ENCODE measurements at regions of chr13 and their contacts with region 1.

Region 1: DNA sequence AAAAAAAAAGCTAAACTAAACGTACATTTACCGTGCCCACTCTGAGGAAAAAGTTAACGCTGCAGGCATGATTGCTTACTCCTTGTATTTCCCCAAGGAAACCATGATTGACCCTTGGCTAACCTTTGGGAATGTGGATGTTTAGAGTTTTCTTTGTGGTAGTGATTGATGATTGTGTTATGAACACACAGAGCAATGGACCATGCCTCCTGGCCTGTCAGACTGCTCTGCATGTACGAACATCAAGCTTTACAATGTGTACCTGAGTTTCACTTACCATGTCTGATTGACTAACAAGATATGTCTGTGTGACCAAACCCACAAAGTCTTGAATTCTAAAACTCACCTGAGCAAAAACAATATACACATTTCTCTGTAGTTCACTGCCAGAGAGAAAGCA is 35.1 kb downstream of the MYCBP2 start:
- DNase-seq: no peak
- H3K4me3 Mint-ChIP-seq: no peak overlapping the region
- H3K27ac Mint-ChIP-seq: no peak overlapping the region
- H3K4me1 Mint-ChIP-seq: peaks cover 41% of the 10 kb centered on the region
- H3K27me3 Mint-ChIP-seq: no peaks in the 10 kb centered on the region

Region 2: GRCh38 chr13:77026818-77027585 is 264.8 kb before region 1 on chr13 and contains the start of gene FBXL3:
- intact Hi-C with region 1: loop called (anchors 5 kb)
- DNase-seq: peak; percentile 78
- H3K4me3 Mint-ChIP-seq: peak within 1 kb of the TSS; percentile 94
- H3K27ac Mint-ChIP-seq: peak within 1 kb of the TSS; percentile 93
- H3K4me1 Mint-ChIP-seq: peaks cover 58% of the 10 kb centered on the region
- H3K27me3 Mint-ChIP-seq: no peaks in the 10 kb centered on the region
- total RNA-seq, gene FBXL3: 40.1 and 40.8 TPM in 2 replicates

Region 3: DNA sequence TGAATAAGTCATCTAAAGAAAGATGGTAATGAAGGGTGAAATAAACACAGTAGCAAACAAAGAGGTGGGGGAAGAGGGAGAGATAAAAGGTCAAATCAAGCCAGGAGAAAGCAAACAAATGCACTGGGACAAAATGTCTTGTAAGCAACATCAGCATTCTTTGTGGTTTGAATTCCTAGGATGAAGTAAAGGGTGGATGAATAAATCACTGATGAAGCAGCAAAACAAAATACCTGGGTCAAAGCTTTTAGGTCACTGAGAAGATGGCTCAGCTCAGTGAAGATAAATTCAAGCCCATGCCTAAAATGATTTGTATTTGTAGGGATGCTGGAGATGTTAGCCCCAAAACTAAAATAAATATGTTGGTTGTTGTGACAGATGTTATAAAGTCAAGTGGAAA is 178.3 kb before region 1 on chr13:
- intact Hi-C with region 1: no loop called
- DNase-seq: no peak
- H3K4me3 Mint-ChIP-seq: no peak overlapping the region
- H3K27ac Mint-ChIP-seq: no peak overlapping the region
- H3K4me1 Mint-ChIP-seq: no peaks in the 10 kb centered on the region
- H3K27me3 Mint-ChIP-seq: no peaks in the 10 kb centered on the region

Region 4: DNA sequence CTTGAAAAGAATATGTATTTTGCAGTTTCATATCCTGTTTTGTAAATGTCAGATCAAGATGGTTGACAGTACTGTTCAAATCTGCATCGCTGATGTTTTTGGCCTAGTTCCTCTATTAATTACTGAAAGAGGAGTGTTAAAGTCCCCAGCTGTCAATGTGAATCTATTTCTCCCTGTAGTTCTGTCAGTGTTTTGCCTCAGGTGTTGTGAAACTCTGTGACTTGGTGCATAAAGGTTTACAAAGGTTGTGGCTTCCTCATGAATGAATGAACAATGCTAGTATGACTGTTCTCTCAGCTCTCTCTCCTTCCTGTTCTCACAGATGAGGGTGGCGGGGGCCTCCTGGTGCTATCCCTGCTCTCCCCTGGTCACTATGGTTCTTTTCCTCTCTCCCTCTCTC is 107.3 kb before region 1 on chr13:
- intact Hi-C with region 1: loop called (anchors 2 kb)
- DNase-seq: no peak
- H3K4me3 Mint-ChIP-seq: no peak overlapping the region
- H3K27ac Mint-ChIP-seq: peak overlapping the region; percentile 49
- H3K4me1 Mint-ChIP-seq: peaks cover 23% of the 10 kb centered on the region
- H3K27me3 Mint-ChIP-seq: no peaks in the 10 kb centered on the region

Region 5: GRCh38 chr13:77230560-77230959 is 61.2 kb before region 1 on chr13:
- intact Hi-C with region 1: loop called (anchors 5 kb)
- DNase-seq: no peak
- H3K4me3 Mint-ChIP-seq: no peak overlapping the region
- H3K27ac Mint-ChIP-seq: peak overlapping the region; percentile 78
- H3K4me1 Mint-ChIP-seq: peaks cover 18% of the 10 kb centered on the region
- H3K27me3 Mint-ChIP-seq: no peaks in the 10 kb centered on the region

Region 6: GRCh38 chr13:77262198-77262597 is 29.6 kb before region 1 on chr13:
- intact Hi-C with region 1: no loop called
- DNase-seq: no peak
- H3K4me3 Mint-ChIP-seq: no peak overlapping the region
- H3K27ac Mint-ChIP-seq: no peak overlapping the region
- H3K4me1 Mint-ChIP-seq: no peaks in the 10 kb centered on the region
- H3K27me3 Mint-ChIP-seq: no peaks in the 10 kb centered on the region

Region 7: DNA sequence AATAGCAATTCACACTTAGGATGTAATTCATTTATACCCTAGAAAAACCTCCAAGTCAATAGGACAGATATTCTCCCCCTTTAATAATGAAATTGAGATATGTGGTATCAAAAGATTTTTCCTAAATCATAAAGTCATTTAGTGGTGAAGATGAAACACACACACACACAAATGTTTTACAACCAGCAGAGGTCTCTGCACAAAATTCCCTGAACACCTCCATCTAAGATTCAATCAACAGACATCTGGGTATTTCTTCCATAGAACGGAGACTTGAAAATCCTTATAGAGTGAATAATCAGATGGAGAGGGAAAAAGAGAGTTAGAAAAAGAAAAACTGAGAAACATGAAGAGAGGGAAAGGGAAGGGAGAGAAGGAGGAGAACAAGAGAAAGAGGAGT is 17.6 kb before region 1 on chr13:
- intact Hi-C with region 1: loop called (anchors 2 kb)
- DNase-seq: no peak
- H3K4me3 Mint-ChIP-seq: no peak overlapping the region
- H3K27ac Mint-ChIP-seq: no peak overlapping the region
- H3K4me1 Mint-ChIP-seq: peaks cover 15% of the 10 kb centered on the region
- H3K27me3 Mint-ChIP-seq: no peaks in the 10 kb centered on the region

Region 8: DNA sequence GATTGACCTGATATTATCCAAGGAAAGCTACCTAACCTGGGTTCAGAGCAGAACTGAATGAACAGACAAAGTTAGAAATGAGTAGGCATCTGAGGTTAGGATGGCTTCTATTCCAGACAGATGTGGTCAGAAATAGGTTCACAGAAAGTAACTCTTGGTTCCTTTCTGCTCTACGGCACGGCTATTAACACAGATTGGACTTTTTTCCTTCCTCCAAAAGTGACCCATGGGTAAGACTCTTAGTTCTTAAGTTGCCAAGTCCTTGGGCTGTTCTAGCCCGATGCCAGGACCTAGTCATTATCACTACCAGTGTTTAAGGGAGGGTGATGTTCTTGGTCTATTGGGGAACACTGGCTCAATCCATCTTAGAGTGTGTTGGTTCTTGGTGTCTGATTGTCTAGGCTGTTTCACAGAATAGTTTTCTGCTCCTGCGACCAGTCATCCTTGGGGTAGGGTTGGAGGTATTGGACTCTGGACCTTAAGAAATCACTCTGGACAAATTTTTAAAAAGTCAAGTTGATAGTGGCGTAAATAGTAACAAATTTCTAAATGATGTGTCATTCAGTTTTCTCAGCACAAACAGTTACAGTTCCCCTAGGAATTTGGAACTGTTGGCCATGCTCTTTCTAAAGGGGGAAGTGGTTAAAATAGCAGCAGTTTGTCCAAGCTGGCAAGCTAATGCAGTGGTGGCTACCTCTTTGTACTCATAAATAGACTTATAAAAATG is 95.3 kb after region 1 on chr13:
- intact Hi-C with region 1: loop called (anchors 5 kb)
- DNase-seq: no peak
- H3K4me3 Mint-ChIP-seq: no peak overlapping the region
- H3K27ac Mint-ChIP-seq: no peak overlapping the region
- H3K4me1 Mint-ChIP-seq: peaks cover 11% of the 10 kb centered on the region
- H3K27me3 Mint-ChIP-seq: peaks cover 42% of the 10 kb centered on the region

Region 9: DNA sequence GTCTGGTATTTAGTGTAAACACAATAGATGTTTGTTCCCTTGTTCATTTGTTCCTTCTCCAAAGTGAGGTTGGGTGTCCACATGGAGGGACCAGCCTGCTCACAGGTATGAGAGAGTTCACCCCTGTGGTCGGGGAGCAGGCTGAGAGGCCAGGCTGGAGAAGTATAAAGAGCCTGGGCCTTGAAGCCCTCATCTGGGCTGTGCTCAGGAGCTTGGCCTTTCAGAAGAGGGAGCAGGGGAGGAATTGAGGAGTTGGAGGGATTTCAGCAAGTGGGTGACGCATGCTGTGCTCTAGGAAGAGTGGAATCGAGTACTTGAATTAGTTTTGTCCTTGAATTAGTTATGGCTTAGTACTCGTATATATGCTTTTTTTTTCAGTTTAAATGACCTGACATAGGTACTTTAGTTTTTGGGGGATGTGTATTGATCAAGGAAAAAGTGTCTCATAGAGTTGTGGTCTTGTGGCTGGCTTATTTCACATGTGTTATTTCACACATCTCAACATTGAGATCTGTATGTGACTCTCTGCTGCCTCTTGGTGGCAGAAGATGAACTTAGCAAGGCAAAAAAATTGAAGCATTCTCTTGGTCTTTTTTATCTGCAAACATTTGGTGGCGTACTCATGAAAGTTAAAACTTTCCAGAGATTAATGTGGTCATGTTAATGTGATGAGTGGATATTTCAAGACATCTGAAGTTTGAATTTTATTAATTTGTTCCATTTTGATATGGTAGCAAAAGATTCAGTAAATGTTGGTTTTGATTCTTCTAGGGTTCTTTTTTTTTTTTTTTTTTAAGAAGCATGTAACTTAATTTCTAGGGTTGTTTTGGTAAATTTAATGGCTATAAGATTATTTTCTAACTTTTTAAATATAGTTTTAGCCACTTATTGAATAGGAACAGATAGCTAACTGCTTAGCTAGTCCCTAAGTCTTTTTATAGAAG is 460.0 kb after region 1 on chr13:
- intact Hi-C with region 1: loop called (anchors 5 kb)
- DNase-seq: peak; percentile 44
- H3K4me3 Mint-ChIP-seq: no peak overlapping the region
- H3K27ac Mint-ChIP-seq: peak overlapping the region; percentile 42
- H3K4me1 Mint-ChIP-seq: peaks cover 18% of the 10 kb centered on the region
- H3K27me3 Mint-ChIP-seq: no peaks in the 10 kb centered on the region

Region 10: DNA sequence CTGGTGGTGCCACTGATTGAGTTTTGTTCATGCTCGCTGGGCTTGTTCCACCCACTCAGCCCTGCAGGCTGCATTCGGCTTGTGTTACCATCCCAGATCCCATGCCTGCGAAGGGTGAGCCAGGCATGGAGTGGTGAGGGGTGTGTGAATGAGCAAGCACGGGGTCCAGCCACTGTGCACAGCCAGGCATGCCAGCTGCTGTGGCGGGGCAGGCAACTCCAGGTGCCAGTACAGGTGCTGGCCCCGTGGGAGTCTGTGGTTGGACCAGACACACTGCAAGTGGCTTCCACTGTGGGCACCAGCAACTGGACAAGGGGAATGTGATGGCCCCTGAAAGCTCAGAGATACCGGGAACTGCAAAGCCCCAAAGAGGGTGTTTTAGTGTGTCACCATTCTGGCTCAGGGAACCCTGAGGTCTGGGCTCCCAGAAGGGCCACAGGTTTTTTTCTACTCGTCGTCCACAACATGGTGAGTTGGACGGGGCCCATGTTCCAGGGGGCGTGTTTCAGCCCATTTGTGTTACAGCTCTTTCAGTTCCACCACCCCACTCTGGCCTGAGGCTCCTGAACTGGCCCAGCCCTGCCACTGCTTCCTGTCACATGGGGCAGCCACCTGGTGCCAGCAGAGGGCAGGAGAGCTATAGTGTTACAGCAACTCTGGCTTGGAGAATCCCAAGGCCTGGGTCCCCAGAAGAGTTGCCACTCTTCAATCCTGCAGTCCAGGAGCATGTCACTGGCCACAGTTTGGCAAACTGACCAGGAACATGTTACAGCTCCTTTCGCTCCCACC is 1584.2 kb after region 1 on chr13:
- intact Hi-C with region 1: no loop called
- DNase-seq: no peak
- H3K4me3 Mint-ChIP-seq: no peak overlapping the region
- H3K27ac Mint-ChIP-seq: no peak overlapping the region
- H3K4me1 Mint-ChIP-seq: no peaks in the 10 kb centered on the region
- H3K27me3 Mint-ChIP-seq: no peaks in the 10 kb centered on the region